Posterior vena cava (tissue), 2 donors: ENCODE measurements at regions of chr3 and their contacts with region 1.

Region 1: GRCh38 chr3:179398574-179399231 is 51.2 kb downstream of the MFN1 start:
- DNase-seq: no peak

Region 2: DNA sequence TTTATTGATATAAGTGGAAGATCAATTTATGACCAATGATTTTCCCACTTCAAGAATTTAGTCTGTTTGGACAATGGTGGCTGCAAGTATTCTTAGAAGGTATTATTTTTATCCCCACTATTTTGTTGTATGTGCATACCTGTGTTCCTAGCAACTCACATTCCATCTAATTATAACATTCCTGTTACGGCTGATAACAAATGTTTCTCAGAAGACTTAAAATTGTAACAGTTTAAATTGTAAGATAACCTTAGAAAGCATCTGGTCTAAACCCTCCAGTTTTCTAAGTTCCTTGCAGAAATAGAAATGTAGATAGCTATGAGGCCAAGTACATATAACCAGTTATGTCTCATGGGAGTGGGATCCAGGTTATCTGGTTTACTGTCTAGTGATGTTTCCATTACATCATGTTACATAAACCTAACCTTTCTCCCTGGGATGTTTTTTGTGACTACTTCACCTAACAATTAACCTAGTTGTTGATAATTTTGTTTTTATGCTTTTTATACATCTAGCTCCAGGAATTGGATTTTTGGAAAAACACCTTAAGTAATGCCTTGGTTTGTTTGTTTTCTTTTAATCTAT is 62.3 kb before region 1 on chr3:
- intact Hi-C with region 1: loop called in 1 of 2 experiments (anchors 2 kb)
- DNase-seq: no peak

Region 3: GRCh38 chr3:180580934-180581333 is 1182.2 kb after region 1 on chr3:
- intact Hi-C with region 1: loop called in 1 of 2 experiments (anchors 10 kb)
- DNase-seq: no peak